ENCODE measurements at regions of chr10 and their contacts with region 1.

Region 1: DNA sequence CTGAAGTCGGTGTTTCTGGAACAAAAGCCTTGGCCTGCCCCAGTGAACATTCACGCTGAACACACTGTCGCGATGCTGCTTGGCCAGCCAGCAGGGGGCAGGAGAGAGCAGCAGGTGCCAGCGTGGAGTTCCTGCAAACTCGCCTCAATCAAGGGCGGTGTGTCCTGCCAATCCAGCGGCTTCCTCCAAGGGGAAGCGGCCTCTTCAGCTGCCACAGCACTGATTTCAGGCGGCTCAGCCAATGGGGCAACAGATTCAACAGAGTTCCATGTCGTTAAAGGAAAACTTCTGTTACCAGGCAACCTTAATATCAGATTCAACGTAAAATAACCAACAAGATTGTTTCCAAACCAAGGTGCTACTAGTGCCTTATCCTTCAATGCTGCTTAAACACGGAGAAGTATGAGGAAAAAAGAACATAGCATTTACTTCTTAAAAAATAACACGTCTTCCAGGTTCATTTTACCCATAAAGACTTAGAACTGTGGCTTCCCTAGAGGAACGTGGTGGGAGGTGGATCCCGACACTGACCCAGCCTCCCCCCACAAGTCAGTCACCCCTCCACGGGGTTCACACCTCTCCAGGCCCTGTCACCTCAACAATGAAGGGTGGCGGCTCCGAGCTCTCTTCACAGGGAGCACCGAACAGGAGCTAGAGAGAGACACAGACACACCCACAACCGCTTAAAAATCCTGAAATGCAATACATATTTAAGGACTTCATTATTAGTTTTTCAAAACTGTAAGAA is 178.2 kb downstream of the DIP2C start:
- DNase-seq: peak; percentile 92 to 95
- ATAC-seq: peak; percentile 90 to 91
- H3K4me3 ChIP-seq: peak overlapping the region in 2 of 4 donors; percentile 12 to 19
- H3K27ac ChIP-seq: peak overlapping the region; percentile 69 to 80 (median 78)
- H3K4me1 ChIP-seq: peaks cover 20 to 25% of the 10 kb centered on the region in 2 donors
- H3K27me3 ChIP-seq: no peaks in the 10 kb centered on the region
- CTCF ChIP-seq: peak; percentile 95 to 98 (median 97)
- POLR2A ChIP-seq: no peak

Region 2: DNA sequence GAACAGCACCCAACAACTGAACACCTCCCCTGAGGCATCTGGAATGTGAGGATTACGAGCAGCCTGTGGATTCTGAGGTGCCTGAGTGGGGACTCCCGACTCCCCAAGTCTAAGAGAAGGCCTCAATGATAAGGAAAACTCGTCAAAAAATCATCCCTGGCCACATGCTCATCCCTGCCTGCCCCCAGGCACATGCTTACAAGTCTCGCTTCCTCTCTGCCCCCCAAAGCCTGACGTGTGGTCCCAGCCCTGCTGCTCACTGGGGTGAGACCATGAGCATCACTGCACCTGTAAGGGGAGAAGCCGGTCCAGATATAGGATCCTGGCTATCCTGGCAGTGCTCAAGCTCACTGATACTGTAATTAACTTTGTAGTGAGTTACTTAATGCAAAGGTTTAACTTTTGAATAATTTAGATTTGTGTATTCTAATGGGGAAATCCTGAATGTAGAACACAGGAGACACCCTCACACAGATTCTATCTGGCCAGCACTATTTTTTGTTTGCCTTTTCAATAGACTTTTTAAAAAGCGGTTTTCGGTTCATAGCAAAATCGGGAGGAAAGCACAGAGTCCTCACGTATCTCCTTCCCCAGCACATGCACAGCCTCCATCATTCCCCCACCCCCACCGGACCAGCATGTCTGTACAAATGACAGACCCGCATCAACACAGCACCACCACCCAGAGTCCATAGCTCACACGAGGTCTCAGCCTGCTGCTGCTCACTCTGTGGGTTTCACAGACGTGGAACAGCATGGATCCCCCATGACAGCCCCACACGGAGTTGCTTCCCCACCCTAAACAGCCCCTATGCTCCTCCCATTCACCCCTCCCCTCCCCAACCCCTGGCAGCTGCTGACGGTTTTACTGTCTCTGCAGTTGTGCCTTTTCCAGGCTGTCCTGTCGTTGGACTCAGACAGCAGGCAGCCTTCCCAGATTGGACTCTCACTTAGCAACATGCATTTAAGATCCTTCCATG is 10.3 kb after region 1 on chr10:
- in situ Hi-C with region 1: no loop called
- intact Hi-C with region 1: no loop called
- DNase-seq: no peak
- ATAC-seq: no peak
- H3K4me3 ChIP-seq: no peak overlapping the region
- H3K27ac ChIP-seq: no peak overlapping the region
- H3K4me1 ChIP-seq: peaks cover 29 to 34% of the 10 kb centered on the region in 2 donors
- H3K27me3 ChIP-seq: no peaks in the 10 kb centered on the region
- CTCF ChIP-seq: no peak
- POLR2A ChIP-seq: no peak

Region 3: DNA sequence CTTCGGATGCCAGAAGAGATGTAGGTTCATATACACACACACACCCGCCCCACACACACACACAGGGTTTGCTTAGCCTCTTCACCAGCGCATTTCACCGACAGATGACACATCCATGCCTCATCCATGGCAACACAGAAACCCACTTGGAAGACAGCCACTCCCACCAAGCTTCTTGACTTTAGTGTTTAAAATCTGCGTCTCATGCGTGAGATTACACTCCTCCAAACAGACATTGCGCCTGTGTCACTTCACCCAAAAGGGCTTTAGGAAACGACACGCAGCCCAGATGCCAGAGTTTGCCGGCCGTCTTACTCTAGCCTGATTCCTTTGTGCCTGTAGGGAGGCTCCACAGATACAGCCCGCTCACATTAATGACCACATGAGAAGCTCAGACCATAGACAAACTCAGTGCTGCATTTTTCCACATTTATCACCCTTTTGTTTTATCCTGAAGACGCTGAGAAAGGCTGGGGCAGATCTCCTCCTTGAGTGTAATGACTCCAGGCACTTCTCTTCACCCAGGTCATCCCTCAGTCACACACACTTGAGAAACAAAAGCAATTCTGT is 104.4 kb after region 1 on chr10:
- in situ Hi-C with region 1: no loop called
- intact Hi-C with region 1: loop called (anchors 2 kb)
- DNase-seq: no peak
- ATAC-seq: no peak
- H3K4me3 ChIP-seq: no peak overlapping the region
- H3K27ac ChIP-seq: no peak overlapping the region
- H3K4me1 ChIP-seq: peaks cover 62 to 76% of the 10 kb centered on the region in 2 donors
- H3K27me3 ChIP-seq: no peaks in the 10 kb centered on the region
- CTCF ChIP-seq: no peak
- POLR2A ChIP-seq: no peak

Region 4: DNA sequence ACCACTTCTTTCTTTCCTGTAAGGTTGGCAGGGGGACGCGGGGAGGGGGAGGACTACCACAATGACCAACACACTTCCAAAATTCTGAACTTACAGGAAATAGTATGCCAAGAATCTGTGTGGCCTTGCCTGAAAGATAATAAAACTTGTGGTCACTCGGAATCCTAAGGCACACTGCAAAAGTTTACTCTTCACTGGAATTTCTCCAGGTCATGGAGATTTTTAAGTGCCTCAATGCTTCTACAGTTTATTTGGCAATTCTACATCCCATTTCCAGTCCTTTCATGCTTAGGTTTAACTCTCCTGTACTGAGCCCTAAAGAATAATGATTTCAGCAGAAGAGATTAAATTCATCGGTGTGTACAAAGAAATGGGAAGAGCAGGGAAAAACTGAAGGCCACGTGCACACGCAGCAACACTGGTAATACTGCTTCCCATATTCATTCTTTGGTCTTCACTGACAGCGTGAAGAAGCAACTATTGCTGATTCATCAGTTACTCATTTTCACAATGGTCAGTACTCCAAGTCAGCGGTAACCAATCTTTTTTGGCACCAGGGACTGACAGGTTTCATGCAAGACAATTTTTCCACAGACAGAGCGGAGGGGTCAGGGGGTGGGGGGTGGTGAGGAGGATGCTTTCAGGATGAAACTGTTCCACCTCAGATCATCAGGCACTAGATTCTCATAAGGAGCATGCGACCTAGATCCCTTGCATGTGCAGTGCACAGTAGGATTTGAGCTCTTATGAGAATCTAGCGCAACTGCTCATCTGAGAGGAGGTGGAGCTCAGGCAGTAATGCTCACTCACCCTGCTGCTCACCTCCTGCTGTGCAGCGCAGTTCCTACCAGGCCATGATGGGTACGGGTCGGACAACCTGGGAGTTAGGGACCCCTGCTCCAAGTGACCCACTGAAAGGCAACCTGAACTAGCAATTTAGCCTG is 410.5 kb after region 1 on chr10:
- in situ Hi-C with region 1: no loop called
- intact Hi-C with region 1: loop called (anchors 5 kb)
- DNase-seq: no peak
- ATAC-seq: peak; percentile 42 to 81
- H3K4me3 ChIP-seq: no peak overlapping the region
- H3K27ac ChIP-seq: peak overlapping the region; percentile 8 to 61 (median 18)
- H3K4me1 ChIP-seq: peaks cover 17 to 28% of the 10 kb centered on the region in 2 donors
- H3K27me3 ChIP-seq: no peaks in the 10 kb centered on the region
- CTCF ChIP-seq: no peak
- POLR2A ChIP-seq: no peak